Natural killer cell (primary cell): ENCODE measurements at regions of chr4 and their contacts with region 1.

Region 1: DNA sequence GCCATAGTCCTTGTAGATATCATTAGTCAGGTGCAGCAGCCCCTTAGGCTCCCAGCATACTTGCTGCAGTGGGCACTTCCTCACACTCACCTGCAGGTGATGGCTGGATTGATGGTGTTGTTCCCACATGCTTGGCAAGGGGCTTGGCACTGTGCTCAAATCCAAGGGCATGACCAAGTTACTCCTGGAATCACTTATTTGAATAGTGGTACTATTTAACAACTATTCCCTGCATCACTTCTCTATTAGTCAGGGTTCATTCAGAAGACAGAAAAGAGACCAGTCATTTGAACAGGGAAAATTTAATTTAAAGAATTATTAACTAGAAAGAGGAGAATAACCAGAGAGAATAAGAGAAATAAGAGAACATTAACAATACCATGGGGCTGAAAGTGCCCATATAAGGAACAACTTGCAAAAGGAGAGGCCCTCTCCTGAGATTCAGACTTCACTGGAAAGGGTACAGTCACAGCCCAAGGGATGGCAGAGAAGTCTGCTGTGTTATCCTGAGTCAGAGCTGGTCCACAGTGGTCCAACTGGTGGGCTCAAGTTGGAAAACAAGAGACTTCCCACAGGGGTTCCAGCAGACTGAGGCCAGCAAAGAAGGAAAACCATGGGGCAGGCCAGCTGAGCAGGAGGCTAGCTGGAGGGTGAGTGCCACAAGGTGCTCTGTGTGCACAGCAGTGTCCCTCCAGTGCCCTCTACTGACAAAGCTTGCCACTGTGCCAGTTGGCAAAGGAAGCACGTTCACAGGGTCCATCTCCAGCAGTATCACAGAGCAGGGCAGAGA is 9.8 kb downstream of the SPP1 start:
- DNase-seq: peak in 1 of 2 donors; percentile 51
- ATAC-seq: peak; percentile 73 to 91 (median 78)
- H3K4me3 ChIP-seq: no peak overlapping the region
- H3K4me3 Mint-ChIP-seq: no peak overlapping the region
- H3K27ac ChIP-seq: no peak overlapping the region
- H3K27ac Mint-ChIP-seq: no peak overlapping the region
- H3K4me1 ChIP-seq: no peaks in the 10 kb centered on the region
- H3K4me1 Mint-ChIP-seq: no peaks in the 10 kb centered on the region
- H3K27me3 ChIP-seq: peaks cover 2% of the 10 kb centered on the region
- H3K27me3 Mint-ChIP-seq: peaks cover 15 to 48% of the 10 kb centered on the region in 2 donors
- CTCF ChIP-seq: peak; percentile 29

Region 2: DNA sequence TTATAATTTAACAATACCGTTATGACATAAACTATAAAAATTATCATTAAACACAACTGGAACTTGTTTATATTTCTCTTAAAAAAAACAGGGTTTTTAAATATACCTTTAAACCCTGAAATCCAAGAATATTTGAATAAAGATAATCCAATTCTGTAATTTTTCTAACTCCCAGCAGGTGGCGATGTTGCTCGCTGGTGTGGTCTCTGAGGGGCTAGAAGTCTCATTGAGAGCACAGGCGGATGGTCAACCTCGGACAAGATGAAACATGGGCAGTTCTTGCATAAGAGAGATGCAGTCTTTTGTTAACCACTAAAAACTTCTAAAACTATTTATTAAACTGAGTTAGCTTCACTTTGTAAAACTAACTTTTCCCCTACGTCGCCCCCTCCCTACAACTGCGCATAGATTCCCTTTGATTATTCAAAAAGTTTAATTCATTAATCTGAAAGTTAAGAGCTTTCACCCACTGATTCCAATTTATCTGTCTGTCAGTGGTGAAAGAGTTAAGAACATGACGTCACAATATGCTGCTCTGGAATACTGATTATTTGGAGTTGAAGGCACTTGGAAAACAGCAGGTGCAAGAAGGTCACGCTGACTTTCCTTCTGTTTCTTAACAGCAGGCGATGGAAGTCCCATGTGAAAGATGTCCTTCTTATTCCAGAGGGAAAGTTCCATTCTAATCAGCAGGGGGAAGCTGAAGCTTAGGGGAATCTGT is 305.7 kb before region 1 on chr4:
- intact Hi-C with region 1: loop called (anchors 10 kb)
- DNase-seq: peak in 1 of 2 donors; percentile 62
- ATAC-seq: peak in 1 of 3 donors; percentile 37
- H3K4me3 ChIP-seq: no peak overlapping the region
- H3K4me3 Mint-ChIP-seq: no peak overlapping the region
- H3K27ac ChIP-seq: no peak overlapping the region
- H3K27ac Mint-ChIP-seq: no peak overlapping the region
- H3K4me1 ChIP-seq: no peaks in the 10 kb centered on the region
- H3K4me1 Mint-ChIP-seq: no peaks in the 10 kb centered on the region
- H3K27me3 ChIP-seq: no peaks in the 10 kb centered on the region
- H3K27me3 Mint-ChIP-seq: no peaks in the 10 kb centered on the region
- CTCF ChIP-seq: peak; percentile 72